Mammary epithelial cell (primary cell): ENCODE measurements at regions of chr6 and their contacts with region 1.

Region 1: GRCh38 chr6:105484238-105485161 is 81.6 kb upstream of the PREP start:
- DNase-seq: peak; percentile 57
- H3K4me3 ChIP-seq: no peak overlapping the region
- H3K27ac ChIP-seq: no peak overlapping the region
- H3K4me1 ChIP-seq: peaks cover 24% of the 10 kb centered on the region
- H3K27me3 ChIP-seq: no peaks in the 10 kb centered on the region
- CTCF ChIP-seq: peak; percentile 86 to 93

Region 2: DNA sequence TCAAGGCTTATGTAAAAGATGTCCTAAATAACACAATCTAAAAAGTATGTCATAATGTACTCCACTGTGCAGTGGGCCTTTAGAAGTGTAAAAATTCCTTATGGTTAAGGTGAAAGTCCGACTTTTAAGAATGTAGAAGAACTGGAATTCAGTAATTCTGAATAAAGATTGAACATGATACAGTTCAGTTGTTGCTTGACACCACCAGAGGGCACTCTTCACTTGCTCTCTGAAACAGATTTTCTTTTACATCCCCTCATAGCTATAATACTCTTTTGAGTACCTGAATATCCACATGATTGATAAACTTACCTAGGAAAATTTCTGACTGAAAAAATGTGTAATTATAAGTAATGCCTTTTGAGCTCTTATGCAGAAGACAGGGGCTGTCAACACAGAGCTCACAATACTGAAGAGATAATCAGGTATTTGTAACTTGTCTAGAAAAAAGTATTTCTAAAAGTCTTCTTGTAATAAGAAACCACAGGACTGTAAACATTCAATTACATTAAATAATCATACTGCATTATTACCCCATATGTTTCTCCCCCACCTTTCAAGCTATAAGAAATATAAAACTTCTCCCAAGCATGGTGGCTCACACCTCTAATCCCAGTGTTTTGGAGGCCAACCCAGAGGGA is 396.8 kb before region 1 on chr6:
- CTCF ChIA-PET with region 1: no interaction called
- dilution Hi-C with region 1: no loop called
- in situ Hi-C with region 1: no loop called
- intact Hi-C with region 1: loop called (anchors 5 kb)
- DNase-seq: peak; percentile 35
- H3K4me3 ChIP-seq: no peak overlapping the region
- H3K27ac ChIP-seq: no peak overlapping the region
- H3K4me1 ChIP-seq: no peaks in the 10 kb centered on the region
- H3K27me3 ChIP-seq: no peaks in the 10 kb centered on the region
- CTCF ChIP-seq: peak; percentile 76 to 81

Region 3: DNA sequence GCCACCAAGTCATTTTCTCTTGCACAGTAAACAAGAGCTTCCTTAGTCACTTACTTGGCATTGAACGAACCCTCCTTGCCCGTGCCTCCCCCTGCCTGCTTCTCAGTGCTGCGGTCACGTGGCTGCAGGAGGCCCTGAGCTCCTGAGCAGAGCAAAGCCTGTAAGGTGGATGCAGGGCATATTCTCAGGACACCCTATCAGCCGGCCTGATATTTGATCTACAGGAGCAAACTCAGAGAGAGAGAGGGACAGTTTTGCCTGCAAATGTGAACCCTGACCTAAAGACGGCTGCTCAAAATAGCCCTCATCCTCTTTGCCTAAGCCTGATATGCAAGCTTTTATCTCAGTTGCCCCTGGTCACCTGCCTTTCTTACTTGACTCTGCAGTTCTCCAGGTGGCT is 211.7 kb before region 1 on chr6:
- CTCF ChIA-PET with region 1: no interaction called
- dilution Hi-C with region 1: no loop called
- in situ Hi-C with region 1: no loop called
- intact Hi-C with region 1: no loop called
- DNase-seq: no peak
- H3K4me3 ChIP-seq: no peak overlapping the region
- H3K27ac ChIP-seq: no peak overlapping the region
- H3K4me1 ChIP-seq: no peaks in the 10 kb centered on the region
- H3K27me3 ChIP-seq: no peaks in the 10 kb centered on the region
- CTCF ChIP-seq: no peak

Region 4: DNA sequence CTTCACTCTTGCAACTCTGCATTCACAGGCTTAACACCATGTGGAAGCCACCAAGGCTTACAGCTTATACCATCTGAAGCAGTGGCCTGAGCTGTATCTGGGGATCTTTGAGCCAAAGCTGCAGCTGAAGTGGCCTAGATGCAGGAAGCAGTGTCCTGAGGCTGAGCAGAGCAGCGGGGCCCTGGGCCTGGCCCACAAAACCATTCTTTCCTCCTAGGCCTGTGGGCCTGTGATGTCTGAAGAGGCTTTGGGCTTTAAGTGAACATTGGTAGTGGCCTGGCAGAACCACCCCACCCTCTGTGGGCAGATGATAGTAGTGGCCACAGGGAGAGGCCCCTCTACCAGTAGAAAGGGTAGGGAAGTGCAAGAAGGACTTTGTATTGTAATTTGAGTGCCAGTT is 74.8 kb before region 1 on chr6:
- CTCF ChIA-PET with region 1: no interaction called
- dilution Hi-C with region 1: no loop called
- in situ Hi-C with region 1: no loop called
- intact Hi-C with region 1: no loop called
- DNase-seq: no peak
- H3K4me3 ChIP-seq: no peak overlapping the region
- H3K27ac ChIP-seq: no peak overlapping the region
- H3K4me1 ChIP-seq: no peaks in the 10 kb centered on the region
- H3K27me3 ChIP-seq: no peaks in the 10 kb centered on the region
- CTCF ChIP-seq: no peak

Region 5: DNA sequence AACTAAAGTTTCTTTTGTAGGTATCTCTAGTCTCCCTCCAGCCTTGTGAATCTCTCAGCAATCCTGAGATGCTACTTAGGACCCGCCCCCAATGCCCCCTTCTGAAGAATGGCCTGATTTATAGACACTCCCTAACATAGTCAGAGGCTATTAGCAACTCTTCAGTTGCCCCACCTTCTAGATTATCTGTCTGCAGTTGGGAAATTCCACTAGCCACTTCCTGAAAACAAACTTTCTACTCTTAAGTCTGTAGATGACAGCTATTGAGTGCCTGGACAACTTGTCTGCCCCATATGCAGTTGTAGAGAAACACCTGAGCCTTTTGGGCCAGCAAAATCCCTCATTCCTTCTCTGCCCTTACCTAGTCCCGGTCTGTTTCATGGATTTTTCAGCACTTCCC is 106.6 kb after region 1 on chr6:
- CTCF ChIA-PET with region 1: no interaction called
- dilution Hi-C with region 1: no loop called
- in situ Hi-C with region 1: loop called in 1 of 2 experiments (anchors 10 kb)
- intact Hi-C with region 1: no loop called
- DNase-seq: peak; percentile 95
- H3K4me3 ChIP-seq: no peak overlapping the region
- H3K27ac ChIP-seq: peak overlapping the region; percentile 99
- H3K4me1 ChIP-seq: peaks cover 77% of the 10 kb centered on the region
- H3K27me3 ChIP-seq: no peaks in the 10 kb centered on the region
- CTCF ChIP-seq: no peak

Region 6: GRCh38 chr6:105678516-105678915 is 194.0 kb after region 1 on chr6:
- CTCF ChIA-PET with region 1: no interaction called
- dilution Hi-C with region 1: no loop called
- in situ Hi-C with region 1: no loop called
- intact Hi-C with region 1: no loop called
- DNase-seq: no peak
- H3K4me3 ChIP-seq: no peak overlapping the region
- H3K27ac ChIP-seq: no peak overlapping the region
- H3K4me1 ChIP-seq: peaks cover 16% of the 10 kb centered on the region
- H3K27me3 ChIP-seq: no peaks in the 10 kb centered on the region
- CTCF ChIP-seq: no peak

Region 7: GRCh38 chr6:105726907-105727655 is 242.6 kb after region 1 on chr6:
- CTCF ChIA-PET with region 1: no interaction called
- dilution Hi-C with region 1: no loop called
- in situ Hi-C with region 1: loop called in 1 of 2 experiments (anchors 10 kb)
- intact Hi-C with region 1: loop called (anchors 1 kb)
- DNase-seq: peak; percentile 89
- H3K4me3 ChIP-seq: no peak overlapping the region
- H3K27ac ChIP-seq: peak overlapping the region; percentile 95
- H3K4me1 ChIP-seq: peaks cover 22% of the 10 kb centered on the region
- H3K27me3 ChIP-seq: no peaks in the 10 kb centered on the region
- CTCF ChIP-seq: no peak

Region 8: DNA sequence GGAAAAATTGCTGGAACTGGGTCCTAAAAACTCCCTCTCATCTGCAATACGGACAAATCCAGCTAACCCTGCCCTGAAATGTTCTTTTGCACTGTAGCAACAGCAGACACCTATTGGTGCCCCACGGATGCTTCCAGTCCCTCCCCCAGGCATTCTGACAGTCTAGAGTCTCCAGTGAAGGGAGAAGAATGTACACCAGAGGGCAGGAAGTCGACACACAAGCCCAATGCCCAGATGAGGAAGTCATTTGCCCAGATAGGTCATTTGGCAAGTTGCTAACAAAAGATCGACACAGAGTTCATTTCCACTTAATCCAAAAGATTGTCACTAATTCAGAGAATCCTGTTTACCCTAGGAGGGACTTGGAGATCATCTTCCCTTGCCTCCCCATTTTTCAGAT is 308.6 kb after region 1 on chr6:
- CTCF ChIA-PET with region 1: no interaction called
- dilution Hi-C with region 1: no loop called
- in situ Hi-C with region 1: no loop called
- intact Hi-C with region 1: loop called (anchors 1 kb)
- DNase-seq: no peak
- H3K4me3 ChIP-seq: no peak overlapping the region
- H3K27ac ChIP-seq: no peak overlapping the region
- H3K4me1 ChIP-seq: no peaks in the 10 kb centered on the region
- H3K27me3 ChIP-seq: no peaks in the 10 kb centered on the region
- CTCF ChIP-seq: peak in 1 of 2 donors; percentile 18

Region 9: DNA sequence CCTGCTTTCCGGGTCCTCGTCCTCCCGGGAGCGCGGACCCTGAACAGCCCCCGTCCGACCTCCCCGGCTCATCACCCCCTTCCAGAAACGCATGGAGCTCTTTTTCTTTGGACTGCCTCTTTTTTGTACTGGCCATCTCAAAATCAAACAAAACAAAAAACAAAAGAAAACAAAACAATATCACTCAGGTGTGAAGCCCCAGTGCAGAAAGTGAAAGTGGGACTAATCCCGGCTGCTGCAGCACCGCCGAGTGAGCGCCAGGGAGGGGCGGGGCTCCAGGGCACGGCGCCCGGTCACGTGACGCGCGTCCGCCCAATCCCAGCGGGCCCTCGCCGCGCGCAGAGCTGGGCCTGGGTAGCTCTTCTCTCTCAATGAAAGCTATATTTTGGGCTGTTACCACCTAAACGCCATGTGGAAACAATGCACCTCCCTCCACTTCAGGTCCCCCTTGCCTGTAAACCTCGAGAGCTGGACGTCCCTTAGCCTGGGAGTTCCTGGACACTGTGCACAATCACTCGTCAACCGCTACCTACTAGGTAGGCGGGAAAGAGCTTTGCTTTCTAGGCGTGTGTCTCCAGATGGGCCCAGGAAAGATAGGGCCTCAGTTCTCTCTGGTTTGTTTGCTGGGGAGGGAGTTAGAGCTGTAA is 507.9 kb after region 1 on chr6:
- CTCF ChIA-PET with region 1: no interaction called
- dilution Hi-C with region 1: no loop called
- in situ Hi-C with region 1: no loop called
- intact Hi-C with region 1: loop called (anchors 10 kb)
- DNase-seq: peak; percentile 67
- H3K4me3 ChIP-seq: peak overlapping the region; percentile 61 to 76 (median 62)
- H3K27ac ChIP-seq: peak overlapping the region; percentile 67
- H3K4me1 ChIP-seq: peaks cover 25% of the 10 kb centered on the region
- H3K27me3 ChIP-seq: no peaks in the 10 kb centered on the region
- CTCF ChIP-seq: no peak

Region 10: GRCh38 chr6:106275692-106276091 is 791.2 kb after region 1 on chr6:
- CTCF ChIA-PET with region 1: no interaction called
- dilution Hi-C with region 1: no loop called
- in situ Hi-C with region 1: loop called in 1 of 2 experiments (anchors 25 kb)
- intact Hi-C with region 1: no loop called
- DNase-seq: no peak
- H3K4me3 ChIP-seq: no peak overlapping the region
- H3K27ac ChIP-seq: no peak overlapping the region
- H3K4me1 ChIP-seq: peaks cover 4% of the 10 kb centered on the region
- H3K27me3 ChIP-seq: no peaks in the 10 kb centered on the region
- CTCF ChIP-seq: no peak